Aorta (tissue), 5 donors: ENCODE measurements at regions of chr17 and their contacts with region 1.

Region 1: DNA sequence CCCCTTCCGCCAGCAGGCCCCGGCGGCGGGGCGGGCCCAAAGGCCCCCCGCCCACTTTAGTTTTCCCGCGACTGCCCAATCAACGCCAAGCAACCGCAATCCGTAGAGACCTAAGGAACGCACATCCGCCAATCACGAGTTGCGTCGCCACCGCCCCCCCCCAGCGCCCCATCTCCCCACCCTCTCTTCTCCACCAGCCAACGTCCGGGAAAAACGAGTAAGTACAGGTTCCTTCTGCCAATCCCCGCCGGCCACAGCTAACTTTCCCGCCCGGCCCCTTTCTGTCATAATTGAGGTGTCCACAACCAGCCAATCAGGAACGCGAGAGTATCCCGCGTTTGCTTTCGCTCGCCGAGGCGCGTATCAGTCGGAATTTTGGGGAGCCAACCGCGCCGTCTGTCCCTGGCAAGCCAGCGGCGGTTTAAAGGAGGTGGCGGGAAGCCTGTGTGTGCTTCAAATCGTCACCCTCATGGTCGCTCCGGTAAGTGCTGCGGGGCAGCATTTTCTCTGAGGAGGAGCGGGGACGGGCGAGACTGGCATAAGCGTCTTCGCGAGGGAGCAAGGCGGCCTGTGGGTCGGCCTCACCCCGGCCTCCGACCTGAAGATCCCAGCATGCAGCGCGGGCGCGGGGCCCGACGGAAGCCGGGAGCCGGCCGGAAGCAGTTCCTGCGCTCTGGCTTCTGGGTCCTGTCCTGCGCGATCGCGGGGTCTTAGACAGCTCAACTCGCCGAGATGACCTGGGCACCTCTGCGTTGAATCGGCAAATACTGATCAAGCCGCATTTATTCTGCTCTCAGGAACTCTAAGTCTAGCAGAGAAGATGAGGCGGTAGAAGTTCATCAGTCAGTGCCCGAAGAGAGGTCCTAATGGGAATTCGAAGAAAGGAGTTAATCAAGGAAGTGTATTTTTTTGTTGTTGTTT is at the start of gene MIS12:
- DNase-seq: peak; percentile 99
- ATAC-seq: peak; percentile 97
- H3K4me3 ChIP-seq: peak within 1 kb of the TSS; percentile 62 to 86
- H3K27ac ChIP-seq: peak within 1 kb of the TSS; percentile 71 to 99
- H3K4me1 ChIP-seq: no peaks in the 10 kb centered on the region
- H3K27me3 ChIP-seq: no peaks in the 10 kb centered on the region
- total RNA-seq, gene MIS12: 14.6 to 16.1 TPM

Region 2: DNA sequence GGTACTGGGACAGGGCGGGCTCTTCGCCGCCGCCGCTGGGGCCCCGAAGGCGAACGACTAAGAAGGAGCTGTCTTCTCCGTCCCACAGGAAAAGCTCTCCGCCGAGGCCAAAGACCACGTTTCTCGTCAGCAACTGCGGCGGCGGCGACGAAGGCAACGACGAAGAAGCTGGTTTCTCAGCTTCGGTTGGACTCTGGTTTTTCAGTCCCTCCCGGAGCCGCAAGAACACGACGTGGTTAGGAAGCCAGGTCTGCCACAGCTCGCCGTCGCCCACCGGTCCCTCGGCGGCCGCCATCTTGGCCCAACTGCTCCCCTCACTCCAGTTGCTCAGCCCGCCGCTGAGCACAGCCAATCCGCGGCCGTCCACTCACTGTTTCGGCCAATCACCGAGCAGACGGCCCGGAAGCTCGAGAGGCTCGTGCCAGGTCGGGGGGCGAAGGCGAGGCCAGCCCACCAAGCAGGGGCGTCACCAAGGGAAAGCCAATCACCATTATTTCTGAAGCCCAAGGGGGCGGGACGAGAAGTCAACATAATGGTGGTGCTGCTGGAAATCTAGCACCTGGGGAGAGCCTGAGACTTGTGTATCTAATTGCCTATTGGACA is 67.0 kb before region 1 on chr17 and contains the start of gene NUP88:
- intact Hi-C with region 1: no loop called
- DNase-seq: peak; percentile 98 to 99
- ATAC-seq: peak; percentile 99
- H3K4me3 ChIP-seq: peak within 1 kb of the TSS; percentile 31 to 83
- H3K27ac ChIP-seq: peak within 1 kb of the TSS in 1 of 2 donors; percentile 46
- H3K4me1 ChIP-seq: peaks cover 0 to 4% of the 10 kb centered on the region in 2 donors
- H3K27me3 ChIP-seq: no peaks in the 10 kb centered on the region
- total RNA-seq, gene NUP88: 43.2 to 56.5 TPM

Region 3: GRCh38 chr17:5446786-5447185 is 39.7 kb before region 1 on chr17:
- intact Hi-C with region 1: no loop called
- DNase-seq: no peak
- ATAC-seq: no peak
- H3K4me3 ChIP-seq: no peak overlapping the region
- H3K27ac ChIP-seq: no peak overlapping the region
- H3K4me1 ChIP-seq: no peaks in the 10 kb centered on the region
- H3K27me3 ChIP-seq: no peaks in the 10 kb centered on the region

Region 4: GRCh38 chr17:5468075-5468473 is 18.4 kb before region 1 on chr17:
- intact Hi-C with region 1: loop called (anchors 2 kb)
- DNase-seq: no peak
- ATAC-seq: no peak
- H3K4me3 ChIP-seq: peak overlapping the region; percentile 61 to 80
- H3K27ac ChIP-seq: no peak overlapping the region
- H3K4me1 ChIP-seq: peaks cover 0 to 7% of the 10 kb centered on the region in 2 donors
- H3K27me3 ChIP-seq: no peaks in the 10 kb centered on the region

Region 5: GRCh38 chr17:5526821-5527598 is 40.5 kb after region 1 on chr17:
- intact Hi-C with region 1: loop called in 1 of 2 experiments (anchors 2 kb)
- DNase-seq: peak; percentile 90 to 92
- ATAC-seq: peak; percentile 90
- H3K4me3 ChIP-seq: no peak overlapping the region
- H3K27ac ChIP-seq: peak overlapping the region; percentile 70 to 92
- H3K4me1 ChIP-seq: peaks cover 0 to 3% of the 10 kb centered on the region in 2 donors
- H3K27me3 ChIP-seq: no peaks in the 10 kb centered on the region